ENCODE measurements at regions of chr3 and their contacts with region 1.

Region 1: DNA sequence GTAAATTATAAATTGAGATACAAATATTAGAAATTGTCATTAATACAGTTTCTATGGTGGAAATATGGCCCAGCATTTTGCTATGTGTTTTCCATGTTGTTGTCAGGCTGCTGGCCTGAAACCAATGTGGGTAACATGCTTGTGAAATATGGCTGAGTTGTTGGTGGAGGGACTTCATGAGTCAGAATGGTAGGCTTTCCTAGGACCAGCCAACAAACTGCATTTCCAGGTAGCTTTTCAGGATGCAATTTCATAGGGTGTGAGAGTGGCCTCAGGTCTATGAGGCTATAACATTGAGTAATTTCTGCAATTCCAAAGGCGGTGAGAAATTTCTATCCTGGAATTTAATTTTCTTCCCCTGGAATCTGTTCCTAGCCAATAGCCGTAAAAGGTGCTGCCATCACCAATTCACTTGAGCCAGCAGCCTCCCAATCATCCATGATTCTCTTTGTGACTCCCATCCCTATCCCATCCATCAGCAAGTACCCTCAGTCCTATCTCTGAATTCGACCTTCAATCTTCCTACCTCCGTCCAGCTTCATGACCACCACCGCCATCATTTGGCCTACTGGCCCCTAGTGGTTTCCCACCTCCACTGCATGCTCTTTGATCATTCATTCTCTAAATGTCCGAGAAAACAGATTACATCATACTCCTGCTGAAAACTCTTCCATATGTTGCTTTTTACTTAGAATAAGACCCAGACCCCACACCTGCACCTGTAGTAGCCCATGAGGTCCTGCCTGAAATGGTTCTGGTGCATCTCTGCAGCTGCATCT is 276.6 kb upstream of the CFAP20DC start:
- DNase-seq: peak; percentile 64
- H3K4me3 ChIP-seq: no peak overlapping the region
- H3K27ac ChIP-seq: peak overlapping the region; percentile 70
- H3K4me1 ChIP-seq: peaks cover 26% of the 10 kb centered on the region
- H3K27me3 ChIP-seq: no peaks in the 10 kb centered on the region
- CTCF ChIP-seq: peak; percentile 29 to 31

Region 2: GRCh38 chr3:59273976-59274375 is 52.5 kb before region 1 on chr3:
- CTCF ChIA-PET with region 1: no interaction called
- dilution Hi-C with region 1: loop called (anchors 5 kb)
- in situ Hi-C with region 1: no loop called
- intact Hi-C with region 1: no loop called
- DNase-seq: no peak
- H3K4me3 ChIP-seq: no peak overlapping the region
- H3K27ac ChIP-seq: no peak overlapping the region
- H3K4me1 ChIP-seq: peaks cover 5% of the 10 kb centered on the region
- H3K27me3 ChIP-seq: no peaks in the 10 kb centered on the region
- CTCF ChIP-seq: no peak

Measured in mammary epithelial cell (primary cell).